Ascending aorta (tissue), 2 donors: ENCODE measurements at regions of chrX and their contacts with region 1.

Region 1: DNA sequence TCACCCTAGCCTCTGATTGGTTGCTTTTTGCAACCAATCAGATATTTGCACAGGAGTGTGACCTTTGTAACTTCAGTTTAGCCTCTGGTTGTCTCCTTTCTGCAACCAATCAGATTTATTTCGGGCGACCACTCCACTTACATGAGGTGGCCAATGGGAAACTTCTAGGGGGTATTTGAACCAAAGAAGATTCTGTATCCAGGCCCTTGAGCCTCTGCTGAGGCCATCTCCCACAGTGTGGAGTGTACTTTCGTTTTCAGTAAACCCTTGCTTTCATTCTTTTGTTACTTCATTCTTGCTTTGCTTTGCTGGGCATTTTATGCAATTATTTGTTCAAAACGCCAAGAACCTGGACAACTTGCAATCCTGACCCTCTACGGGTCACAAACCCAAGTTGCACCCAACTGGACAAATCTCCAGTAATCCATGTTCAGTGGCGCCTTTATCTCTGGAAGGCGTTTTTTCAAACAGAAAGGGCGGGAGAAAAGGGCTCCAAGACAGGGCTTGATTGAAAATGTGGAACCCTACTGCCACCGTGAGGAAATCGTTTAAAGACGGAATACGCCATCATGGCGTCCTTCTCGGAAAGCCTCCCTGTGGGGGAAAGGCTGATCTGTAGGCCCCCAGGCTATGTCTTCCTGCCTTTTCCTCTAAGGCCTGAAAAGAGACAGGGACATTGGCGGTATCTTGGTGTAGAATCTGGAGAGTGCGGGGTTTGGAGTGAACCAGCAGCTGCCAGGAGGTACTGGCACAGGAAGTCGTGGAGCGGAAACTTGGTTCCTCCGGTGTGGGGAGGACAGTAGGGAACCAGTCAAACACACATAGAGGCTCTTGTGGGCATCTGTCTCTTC is 184.6 kb downstream of the OR13H1 start:
- DNase-seq: peak; percentile 21 to 90
- H3K4me3 ChIP-seq: peak overlapping the region; percentile 49 to 64
- H3K27ac ChIP-seq: peak overlapping the region; percentile 86 to 90
- H3K4me1 ChIP-seq: no peaks in the 10 kb centered on the region
- H3K27me3 ChIP-seq: no peaks in the 10 kb centered on the region
- CTCF ChIP-seq: peak; percentile 45 to 61 (median 57)

Region 2: GRCh38 chrX:131710431-131711045 is 18.0 kb before region 1 on chrX:
- intact Hi-C with region 1: loop called (anchors 1 kb)
- DNase-seq: no peak
- H3K4me3 ChIP-seq: no peak overlapping the region
- H3K27ac ChIP-seq: peak overlapping the region; percentile 17 to 19
- H3K4me1 ChIP-seq: no peaks in the 10 kb centered on the region
- H3K27me3 ChIP-seq: no peaks in the 10 kb centered on the region
- CTCF ChIP-seq: no peak

Region 3: GRCh38 chrX:131752489-131753198 is 24.1 kb after region 1 on chrX:
- intact Hi-C with region 1: loop called (anchors 2 kb)
- DNase-seq: peak; percentile 30 to 91
- H3K4me3 ChIP-seq: peak overlapping the region; percentile 45 to 71
- H3K27ac ChIP-seq: peak overlapping the region; percentile 79 to 87
- H3K4me1 ChIP-seq: no peaks in the 10 kb centered on the region
- H3K27me3 ChIP-seq: no peaks in the 10 kb centered on the region
- CTCF ChIP-seq: peak in 2 of 3 experiments; percentile 38 to 42

Region 4: DNA sequence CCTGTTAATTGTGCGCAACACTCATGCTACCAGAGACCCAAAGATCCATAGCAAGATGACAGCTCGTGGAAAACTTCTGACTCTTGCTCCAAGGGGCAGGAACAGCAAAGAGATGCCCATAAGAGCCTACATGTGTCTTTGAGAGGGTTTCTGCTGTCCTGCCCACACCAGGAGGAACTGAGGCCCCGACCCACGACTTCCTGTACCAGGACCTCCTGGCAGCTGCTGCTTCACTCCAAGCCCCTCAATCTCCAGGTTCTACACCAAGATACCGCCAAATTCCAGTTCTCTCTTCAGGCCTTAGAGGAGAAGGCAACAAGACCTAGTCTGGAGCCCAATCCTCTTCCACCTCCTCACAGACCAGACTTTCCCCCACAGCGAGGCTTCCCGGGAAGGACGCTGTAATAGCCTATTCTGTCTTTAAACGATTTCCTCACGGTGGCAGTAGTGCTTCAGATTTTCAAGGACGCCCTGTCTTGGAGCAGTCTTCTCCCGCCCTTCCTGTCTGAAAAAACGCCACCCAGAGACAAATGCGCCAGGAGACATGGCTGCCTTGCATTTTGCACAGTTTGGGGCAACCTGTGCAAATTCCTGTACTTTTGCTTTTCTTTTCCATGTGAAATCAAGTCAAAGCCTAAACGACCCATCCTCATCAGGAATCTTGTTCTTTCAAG is 64.4 kb after region 1 on chrX:
- intact Hi-C with region 1: no loop called
- DNase-seq: peak; percentile 58 to 94
- H3K4me3 ChIP-seq: peak overlapping the region; percentile 55 to 68
- H3K27ac ChIP-seq: peak overlapping the region; percentile 78 to 93
- H3K4me1 ChIP-seq: no peaks in the 10 kb centered on the region
- H3K27me3 ChIP-seq: peaks cover 3% of the 10 kb centered on the region
- CTCF ChIP-seq: peak; percentile 22 to 60 (median 34)